Activated CD4-positive, alpha-beta T cell treated with anti-CD3 and anti-CD28 coated beads for 36 hours (primary cell): ENCODE measurements at regions of chr5 and their contacts with region 1.

Region 1: GRCh38 chr5:119340597-119341218 is 15.1 kb upstream of the TNFAIP8 start:
- DNase-seq: peak; percentile 71
- ATAC-seq: peak; percentile 14
- H3K4me3 Mint-ChIP-seq: peak overlapping the region; percentile 71
- H3K27ac Mint-ChIP-seq: peak overlapping the region; percentile 96
- H3K4me1 Mint-ChIP-seq: peaks cover 98% of the 10 kb centered on the region
- H3K27me3 Mint-ChIP-seq: no peaks in the 10 kb centered on the region

Region 2: GRCh38 chr5:119070828-119071572 is 269.7 kb before region 1 on chr5 and contains the start of gene DMXL1:
- CTCF ChIA-PET with region 1: interaction called, 3 read pairs
- POLR2A ChIA-PET with region 1: no interaction called
- intact Hi-C with region 1: loop called (anchors 2 to 5 kb)
- DNase-seq: peak; percentile 99
- ATAC-seq: peak; percentile 87
- H3K4me3 Mint-ChIP-seq: peak within 1 kb of the TSS; percentile 92
- H3K27ac Mint-ChIP-seq: peak within 1 kb of the TSS; percentile 96
- H3K4me1 Mint-ChIP-seq: peaks cover 35% of the 10 kb centered on the region
- H3K27me3 Mint-ChIP-seq: no peaks in the 10 kb centered on the region
- total RNA-seq, gene DMXL1: 23.5 to 31.1 TPM

Region 3: DNA sequence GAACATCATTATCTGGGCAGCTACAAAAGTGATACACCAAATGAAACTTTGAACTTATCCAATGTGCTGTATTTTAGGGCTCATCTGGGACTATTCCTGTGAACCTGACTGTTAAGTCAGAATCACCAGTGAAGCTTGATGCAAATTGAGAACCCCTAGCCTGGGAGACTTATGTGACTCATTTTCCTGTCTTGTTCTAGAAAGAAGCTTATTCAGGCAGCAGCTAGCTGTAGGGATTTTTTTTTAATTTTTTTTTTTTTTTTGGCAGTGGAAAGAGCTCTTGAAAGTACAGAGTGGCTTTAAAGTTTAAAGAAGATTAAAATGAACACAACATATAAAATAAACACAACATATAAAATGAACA is 66.0 kb before region 1 on chr5:
- CTCF ChIA-PET with region 1: interaction called, 6 read pairs
- POLR2A ChIA-PET with region 1: interaction called, 5 read pairs
- intact Hi-C with region 1: loop called (anchors 2 to 5 kb)
- DNase-seq: no peak
- ATAC-seq: peak; percentile 65
- H3K4me3 Mint-ChIP-seq: peak overlapping the region; percentile 96
- H3K27ac Mint-ChIP-seq: peak overlapping the region; percentile 96
- H3K4me1 Mint-ChIP-seq: peaks cover 87% of the 10 kb centered on the region
- H3K27me3 Mint-ChIP-seq: no peaks in the 10 kb centered on the region

Region 4: GRCh38 chr5:119309326-119309725 is 31.4 kb before region 1 on chr5:
- CTCF ChIA-PET with region 1: interaction called, 5 read pairs
- POLR2A ChIA-PET with region 1: no interaction called
- intact Hi-C with region 1: loop called (anchors 1 to 2 kb)
- DNase-seq: no peak
- ATAC-seq: no peak
- H3K4me3 Mint-ChIP-seq: peak overlapping the region; percentile 53
- H3K27ac Mint-ChIP-seq: peak overlapping the region; percentile 91
- H3K4me1 Mint-ChIP-seq: peaks cover 91% of the 10 kb centered on the region
- H3K27me3 Mint-ChIP-seq: no peaks in the 10 kb centered on the region

Region 5: DNA sequence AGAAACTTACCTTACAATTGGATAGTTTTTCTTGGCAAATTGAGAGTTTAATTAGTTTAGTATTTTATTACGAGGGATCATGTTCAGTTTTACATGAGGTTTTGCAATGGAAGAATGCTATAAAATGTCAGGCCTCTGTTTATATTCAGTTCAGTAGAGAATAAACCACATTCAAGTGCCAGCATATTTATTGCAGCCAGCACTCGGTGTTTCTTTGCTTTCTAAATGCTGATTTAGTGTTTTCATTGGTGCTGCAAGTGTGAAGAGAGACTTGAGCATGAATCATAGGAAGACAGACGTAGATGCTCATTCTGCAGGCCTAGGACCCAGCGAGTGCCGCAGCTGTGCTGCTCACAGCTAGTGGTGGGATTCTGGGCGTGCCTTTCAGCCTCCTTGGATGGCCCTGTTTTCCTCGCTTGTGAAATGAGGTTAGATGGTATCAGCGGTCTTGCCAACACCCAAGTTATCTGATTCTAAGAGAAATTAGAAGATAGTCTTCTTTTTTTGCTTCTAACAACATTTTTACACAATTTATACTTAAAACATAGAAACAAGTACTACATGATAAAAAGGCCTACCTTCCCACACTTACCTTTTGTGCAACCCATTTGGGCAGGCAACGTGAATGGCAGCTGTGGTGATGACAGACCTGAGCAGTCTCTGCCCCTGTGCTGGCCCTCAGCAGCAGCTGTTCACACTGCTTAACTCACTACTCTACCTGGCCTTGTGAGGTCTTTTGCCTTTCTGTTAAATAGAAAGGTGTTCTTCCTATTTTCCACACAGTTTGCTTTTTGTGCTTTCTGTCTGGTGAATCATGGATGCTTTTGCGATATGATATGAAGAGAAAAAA is 11.7 kb before region 1 on chr5:
- CTCF ChIA-PET with region 1: interaction called, 14 read pairs
- POLR2A ChIA-PET with region 1: interaction called, 8 read pairs
- intact Hi-C with region 1: loop called (anchors 1 kb)
- DNase-seq: peak; percentile 80
- ATAC-seq: peak; percentile 58
- H3K4me3 Mint-ChIP-seq: peak overlapping the region; percentile 45
- H3K27ac Mint-ChIP-seq: peak overlapping the region; percentile 98
- H3K4me1 Mint-ChIP-seq: peaks cover 96% of the 10 kb centered on the region
- H3K27me3 Mint-ChIP-seq: no peaks in the 10 kb centered on the region

Region 6: GRCh38 chr5:119367502-119368237 is 27.0 kb after region 1 on chr5:
- CTCF ChIA-PET with region 1: interaction called, 5 read pairs
- POLR2A ChIA-PET with region 1: interaction called, 9 read pairs
- intact Hi-C with region 1: loop called (anchors 1 kb)
- DNase-seq: peak; percentile 25
- ATAC-seq: peak; percentile 69
- H3K4me3 Mint-ChIP-seq: peak overlapping the region; percentile 57
- H3K27ac Mint-ChIP-seq: peak overlapping the region; percentile 95
- H3K4me1 Mint-ChIP-seq: peaks cover 89% of the 10 kb centered on the region
- H3K27me3 Mint-ChIP-seq: no peaks in the 10 kb centered on the region